B cell (primary cell): ENCODE measurements at regions of chr7 and their contacts with region 1.

Region 1: GRCh38 chr7:94395141-94396036 is 694 bp downstream of the COL1A2 start:
- DNase-seq: peak; percentile 77
- ATAC-seq: peak; percentile 79
- H3K4me3 ChIP-seq: peak overlapping the region in 3 of 5 experiments; percentile 40 to 66 (median 50)
- H3K4me3 Mint-ChIP-seq: peak overlapping the region; percentile 75
- H3K27ac ChIP-seq: no peak overlapping the region
- H3K27ac Mint-ChIP-seq: no peak overlapping the region
- H3K4me1 ChIP-seq: peaks cover 15 to 16% of the 10 kb centered on the region in 2 donors
- H3K4me1 Mint-ChIP-seq: peaks cover 10% of the 10 kb centered on the region
- H3K27me3 ChIP-seq: peaks cover 0 to 29% (median 8%) of the 10 kb centered on the region in 4 experiments
- H3K27me3 Mint-ChIP-seq: peaks cover 37% of the 10 kb centered on the region
- CTCF ChIP-seq: peak; percentile 86

Region 2: GRCh38 chr7:93245525-93246432 is 1149.6 kb before region 1 on chr7:
- CTCF ChIA-PET with region 1: interaction called, 12 read pairs
- POLR2A ChIA-PET with region 1: no interaction called
- intact Hi-C with region 1: loop called (anchors 2 kb)
- DNase-seq: peak; percentile 54
- ATAC-seq: peak; percentile 28
- H3K4me3 ChIP-seq: no peak overlapping the region
- H3K4me3 Mint-ChIP-seq: no peak overlapping the region
- H3K27ac ChIP-seq: no peak overlapping the region
- H3K27ac Mint-ChIP-seq: no peak overlapping the region
- H3K4me1 ChIP-seq: no peaks in the 10 kb centered on the region
- H3K4me1 Mint-ChIP-seq: peaks cover 6% of the 10 kb centered on the region
- H3K27me3 ChIP-seq: no peaks in the 10 kb centered on the region
- H3K27me3 Mint-ChIP-seq: no peaks in the 10 kb centered on the region
- CTCF ChIP-seq: peak; percentile 86

Region 3: GRCh38 chr7:93715234-93715633 is 680.2 kb before region 1 on chr7:
- CTCF ChIA-PET with region 1: interaction called, 13 read pairs
- POLR2A ChIA-PET with region 1: no interaction called
- intact Hi-C with region 1: no loop called
- DNase-seq: peak; percentile 40
- ATAC-seq: no peak
- H3K4me3 ChIP-seq: no peak overlapping the region
- H3K4me3 Mint-ChIP-seq: no peak overlapping the region
- H3K27ac ChIP-seq: no peak overlapping the region
- H3K27ac Mint-ChIP-seq: no peak overlapping the region
- H3K4me1 ChIP-seq: no peaks in the 10 kb centered on the region
- H3K4me1 Mint-ChIP-seq: no peaks in the 10 kb centered on the region
- H3K27me3 ChIP-seq: peaks cover 0 to 9% (median 0%) of the 10 kb centered on the region in 4 experiments
- H3K27me3 Mint-ChIP-seq: peaks cover 28% of the 10 kb centered on the region
- CTCF ChIP-seq: peak; percentile 46

Region 4: DNA sequence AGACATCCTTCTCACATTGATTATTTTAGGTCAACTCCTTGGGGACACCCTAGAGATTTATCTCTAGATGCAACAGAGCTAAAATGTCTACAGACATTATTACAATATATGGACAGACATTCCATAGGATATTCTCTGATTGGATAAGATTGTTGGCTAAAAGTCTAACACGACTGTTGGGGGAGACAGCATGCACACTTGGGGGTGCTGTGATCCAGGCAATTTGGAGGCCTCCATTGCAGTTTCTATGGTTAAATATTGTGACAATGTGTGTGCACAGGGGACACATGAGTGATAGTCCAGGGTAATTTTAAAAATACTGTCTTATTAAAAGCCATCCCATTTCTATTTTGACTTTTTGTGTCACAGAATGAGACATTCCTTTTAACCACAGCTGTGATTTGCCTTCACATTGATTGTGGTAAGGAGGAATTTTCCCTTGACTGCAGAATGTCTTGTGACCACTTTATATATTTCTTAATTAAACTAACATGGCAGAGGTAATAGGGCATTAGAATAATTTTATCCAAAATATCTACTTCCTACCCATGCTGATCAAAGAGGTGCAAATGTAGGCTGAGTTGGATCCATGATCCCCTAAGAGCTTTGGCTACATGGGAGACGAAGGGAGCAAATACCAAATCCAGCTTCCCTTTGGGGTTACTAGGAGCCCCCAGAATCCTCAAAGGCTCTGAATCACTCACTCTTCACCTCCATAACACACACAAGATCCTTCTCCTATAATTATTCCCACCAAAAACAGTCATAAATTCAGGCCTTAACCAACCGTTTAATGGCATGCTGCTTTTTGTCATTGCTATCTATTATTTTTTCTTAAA is 512.1 kb before region 1 on chr7:
- CTCF ChIA-PET with region 1: no interaction called
- POLR2A ChIA-PET with region 1: no interaction called
- intact Hi-C with region 1: loop called (anchors 1 kb)
- DNase-seq: peak; percentile 8
- ATAC-seq: no peak
- H3K4me3 ChIP-seq: no peak overlapping the region
- H3K4me3 Mint-ChIP-seq: no peak overlapping the region
- H3K27ac ChIP-seq: no peak overlapping the region
- H3K27ac Mint-ChIP-seq: no peak overlapping the region
- H3K4me1 ChIP-seq: no peaks in the 10 kb centered on the region
- H3K4me1 Mint-ChIP-seq: no peaks in the 10 kb centered on the region
- H3K27me3 ChIP-seq: peaks cover 0 to 6% (median 0%) of the 10 kb centered on the region in 4 experiments
- H3K27me3 Mint-ChIP-seq: peaks cover 18% of the 10 kb centered on the region
- CTCF ChIP-seq: peak; percentile 14

Region 5: DNA sequence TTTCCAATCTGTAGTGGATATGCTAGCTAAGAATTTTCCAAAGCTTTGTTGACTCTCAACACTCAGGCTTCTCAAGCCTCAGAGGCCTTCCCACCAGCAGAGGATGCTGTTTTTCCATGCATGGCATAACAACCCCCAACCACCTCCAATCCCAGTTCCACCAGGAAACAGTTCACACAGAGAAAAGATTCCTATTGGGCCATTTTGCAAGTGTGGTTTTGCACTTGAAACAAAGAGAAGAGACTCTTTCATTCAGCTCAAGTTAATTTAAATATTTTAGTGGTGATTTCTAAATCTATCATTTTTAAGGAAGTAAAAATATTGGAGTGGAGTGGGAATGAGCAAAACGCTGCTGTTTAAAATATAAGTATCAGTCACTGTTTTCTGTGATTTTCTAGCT is 106.3 kb before region 1 on chr7:
- CTCF ChIA-PET with region 1: interaction called, 11 read pairs
- POLR2A ChIA-PET with region 1: no interaction called
- intact Hi-C with region 1: loop called (anchors 1 kb)
- DNase-seq: peak; percentile 27
- ATAC-seq: no peak
- H3K4me3 ChIP-seq: no peak overlapping the region
- H3K4me3 Mint-ChIP-seq: no peak overlapping the region
- H3K27ac ChIP-seq: no peak overlapping the region
- H3K27ac Mint-ChIP-seq: no peak overlapping the region
- H3K4me1 ChIP-seq: no peaks in the 10 kb centered on the region
- H3K4me1 Mint-ChIP-seq: no peaks in the 10 kb centered on the region
- H3K27me3 ChIP-seq: peaks cover 0 to 4% (median 0%) of the 10 kb centered on the region in 4 experiments
- H3K27me3 Mint-ChIP-seq: peaks cover 28% of the 10 kb centered on the region
- CTCF ChIP-seq: peak; percentile 11